Left cardiac atrium (tissue), 4 donors: ENCODE measurements at regions of chr18 and their contacts with region 1.

Region 1: DNA sequence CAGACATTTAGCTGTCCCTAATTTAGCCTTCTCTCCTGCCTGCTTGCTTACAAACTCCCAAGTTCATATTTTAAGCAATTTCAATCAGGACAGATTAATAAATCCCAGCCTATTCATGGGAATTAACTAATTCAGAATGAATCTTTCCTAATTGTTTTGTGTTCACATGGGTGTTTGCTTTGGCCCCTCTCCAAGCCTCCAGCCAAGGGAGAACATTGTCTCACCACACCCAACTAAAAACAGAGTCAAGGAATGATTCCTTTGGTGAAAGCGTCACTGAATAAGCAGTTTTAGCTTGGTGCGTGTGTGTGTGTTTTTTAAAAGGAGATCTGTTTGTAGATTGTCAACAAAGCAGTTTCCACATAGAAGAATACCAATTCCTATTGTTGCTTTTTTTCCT is 43.0 kb upstream of the DSG1 start:
- DNase-seq: peak; percentile 84
- ATAC-seq: peak; percentile 60 to 87

Region 2: GRCh38 chr18:31010601-31011000 is 264.3 kb before region 1 on chr18:
- intact Hi-C with region 1: no loop called
- DNase-seq: no peak
- ATAC-seq: no peak

Region 3: GRCh38 chr18:31206787-31207381 is 68.0 kb before region 1 on chr18:
- intact Hi-C with region 1: no loop called
- DNase-seq: peak; percentile 53
- ATAC-seq: peak; percentile 90 to 93

Region 4: DNA sequence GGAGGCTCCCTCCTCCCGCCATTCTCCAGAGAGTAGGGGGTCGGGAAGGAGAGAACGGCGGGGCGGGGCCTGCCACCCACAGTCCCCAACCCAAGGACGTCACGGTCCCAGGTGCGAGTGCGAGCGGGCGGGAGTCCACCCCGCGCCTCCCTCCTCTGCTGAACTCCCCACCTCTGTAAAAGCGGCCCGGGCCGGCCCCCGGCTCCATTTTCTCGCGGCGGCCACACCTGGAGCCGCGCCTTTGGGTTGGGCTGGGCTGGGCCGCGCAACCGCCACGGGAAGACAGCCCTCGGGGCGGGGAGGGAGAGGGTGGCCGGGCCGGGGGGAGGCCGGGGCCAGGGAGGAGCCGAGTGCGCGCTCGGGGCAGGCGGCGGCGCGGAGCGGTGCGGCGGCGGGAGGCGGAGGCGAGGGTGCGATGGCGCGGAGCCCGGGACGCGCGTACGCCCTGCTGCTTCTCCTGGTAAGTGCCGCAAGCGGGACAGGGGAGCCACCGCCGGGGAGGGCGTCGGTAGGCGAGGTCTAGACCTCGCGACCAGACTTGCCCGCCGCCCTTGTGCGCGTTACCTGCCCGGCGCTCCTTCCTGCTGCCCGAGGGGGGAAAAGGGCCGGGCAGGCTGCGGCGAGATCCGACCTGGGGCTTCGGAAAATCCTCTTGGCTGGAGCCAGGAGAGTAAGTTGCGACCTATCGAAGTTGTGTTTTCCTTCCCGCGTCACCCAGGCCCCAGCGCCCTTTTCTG is 223.1 kb after region 1 on chr18 and contains the start of gene DSG2:
- intact Hi-C with region 1: loop called in 1 of 2 experiments (anchors 5 kb)
- DNase-seq: peak; percentile 74
- ATAC-seq: peak; percentile 98
- total RNA-seq, gene DSG2: 47.5 to 51.0 TPM